IMR-90 (cell line): ENCODE measurements at regions of chr3 and their contacts with region 1.

Region 1: GRCh38 chr3:53347261-53348064 is at the start of gene DCP1A:
- DNase-seq: peak; percentile 97
- ATAC-seq: peak; percentile 97
- H3K4me3 ChIP-seq: peak within 1 kb of the TSS; percentile 82
- H3K27ac ChIP-seq: peak within 1 kb of the TSS; percentile 97
- H3K4me1 ChIP-seq: no peaks in the 10 kb centered on the region; the same call in 1 of the 2 replicates
- H3K27me3 ChIP-seq: no peaks in the 10 kb centered on the region
- CTCF ChIP-seq: no peak
- POLR2A ChIP-seq: peak; percentile 97
- RAD21 ChIP-seq: no peak
- total RNA-seq, gene DCP1A: 18.6 and 30.1 TPM in 2 replicates

Region 2: GRCh38 chr3:53236112-53236841 is 111.2 kb before region 1 on chr3:
- CTCF ChIA-PET with region 1: no interaction called
- POLR2A ChIA-PET with region 1: no interaction called
- dilution Hi-C with region 1: no loop called
- in situ Hi-C with region 1: no loop called
- intact Hi-C with region 1: no loop called
- DNase-seq: peak; percentile 93
- ATAC-seq: peak; percentile 82
- H3K4me3 ChIP-seq: no peak overlapping the region
- H3K27ac ChIP-seq: peak overlapping the region; percentile 94
- H3K4me1 ChIP-seq: peaks cover 24% of the 10 kb centered on the region
- H3K27me3 ChIP-seq: no peaks in the 10 kb centered on the region
- CTCF ChIP-seq: no peak
- POLR2A ChIP-seq: no peak
- RAD21 ChIP-seq: no peak; the same call in 1 of the 2 replicates

Region 3: DNA sequence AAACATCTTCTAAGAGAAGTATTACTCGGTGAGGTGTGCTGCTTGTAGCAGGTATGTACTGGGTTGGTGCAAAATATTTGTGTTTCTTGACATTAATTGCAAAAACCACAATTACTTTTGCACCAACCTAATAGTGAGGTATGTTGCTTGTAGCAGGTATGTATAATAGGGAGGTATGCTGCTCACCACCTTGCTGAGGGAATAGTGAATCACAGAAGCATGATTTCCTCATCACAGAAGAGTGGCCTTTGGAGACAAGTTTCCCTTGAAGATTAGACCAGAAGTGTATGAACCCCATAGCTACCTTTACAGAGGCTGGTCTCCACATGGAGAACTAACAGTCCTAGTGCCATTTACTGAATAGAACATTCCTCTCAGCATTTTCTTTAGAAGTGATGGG is 15.6 kb before region 1 on chr3:
- CTCF ChIA-PET with region 1: no interaction called
- POLR2A ChIA-PET with region 1: interaction called, 4 read pairs
- dilution Hi-C with region 1: no loop called
- in situ Hi-C with region 1: no loop called
- intact Hi-C with region 1: loop called (anchors 2 kb)
- DNase-seq: no peak
- ATAC-seq: no peak
- H3K4me3 ChIP-seq: no peak overlapping the region
- H3K27ac ChIP-seq: no peak overlapping the region
- H3K4me1 ChIP-seq: no peaks in the 10 kb centered on the region; the same call in 1 of the 2 replicates
- H3K27me3 ChIP-seq: no peaks in the 10 kb centered on the region
- CTCF ChIP-seq: no peak
- POLR2A ChIP-seq: no peak
- RAD21 ChIP-seq: no peak